Activated T-helper 1 cell treated with anti-CD3 and anti-CD28 coated beads, Interleukin-12 subunit alpha, Interleukin-12 subunit beta, Interleukin-2, Interleukin-4 antibody, amounts not matched to agents 30 ng/mL and 10 ng/mL and 1 ng/mL, durations not matched to agents 14 hours and 24 hours and 36 hours (primary cell): ENCODE measurements at regions of chr14 and their contacts with region 1.

Region 1: GRCh38 chr14:37985826-37986470 is 221.8 kb upstream of the SSTR1 start:
- DNase-seq: peak; percentile 17
- H3K4me3 Mint-ChIP-seq: no peak overlapping the region
- H3K27ac Mint-ChIP-seq: no peak overlapping the region
- H3K4me1 Mint-ChIP-seq: no peaks in the 10 kb centered on the region
- H3K27me3 Mint-ChIP-seq: peaks cover 2% of the 10 kb centered on the region

Region 2: DNA sequence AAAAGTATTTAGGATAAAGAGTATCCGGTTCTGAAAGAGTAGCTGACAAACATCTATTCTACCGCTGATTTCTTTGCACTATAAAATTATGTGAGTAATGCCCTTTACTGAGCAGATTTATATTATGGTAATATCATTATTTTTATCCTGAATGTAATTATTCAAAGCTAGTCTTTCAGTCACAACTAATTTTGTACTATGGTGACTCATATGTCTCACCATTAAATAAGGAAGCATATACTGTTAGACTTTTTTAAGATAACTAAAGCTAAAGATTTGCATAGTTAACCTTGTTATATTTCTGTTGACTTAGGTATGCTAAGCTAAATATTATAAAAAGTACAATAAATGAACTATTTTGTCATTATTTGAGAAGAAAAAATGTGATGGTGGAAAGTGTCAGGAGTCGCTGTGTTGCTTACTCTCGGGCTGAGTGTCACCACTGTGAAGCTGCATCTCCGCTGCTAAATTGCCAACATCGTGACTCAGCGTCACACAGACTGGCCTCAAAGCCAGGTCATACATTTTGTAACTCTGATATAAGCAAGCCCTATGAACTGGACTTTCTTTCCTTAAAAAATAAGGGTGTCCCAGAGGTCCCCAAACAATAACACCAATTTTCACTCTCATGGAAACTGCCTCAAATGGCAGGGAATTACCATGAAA is 152.7 kb after region 1 on chr14:
- intact Hi-C with region 1: loop called (anchors 10 kb)
- DNase-seq: no peak
- H3K4me3 Mint-ChIP-seq: no peak overlapping the region
- H3K27ac Mint-ChIP-seq: no peak overlapping the region
- H3K4me1 Mint-ChIP-seq: no peaks in the 10 kb centered on the region
- H3K27me3 Mint-ChIP-seq: peaks cover 2% of the 10 kb centered on the region

Region 3: DNA sequence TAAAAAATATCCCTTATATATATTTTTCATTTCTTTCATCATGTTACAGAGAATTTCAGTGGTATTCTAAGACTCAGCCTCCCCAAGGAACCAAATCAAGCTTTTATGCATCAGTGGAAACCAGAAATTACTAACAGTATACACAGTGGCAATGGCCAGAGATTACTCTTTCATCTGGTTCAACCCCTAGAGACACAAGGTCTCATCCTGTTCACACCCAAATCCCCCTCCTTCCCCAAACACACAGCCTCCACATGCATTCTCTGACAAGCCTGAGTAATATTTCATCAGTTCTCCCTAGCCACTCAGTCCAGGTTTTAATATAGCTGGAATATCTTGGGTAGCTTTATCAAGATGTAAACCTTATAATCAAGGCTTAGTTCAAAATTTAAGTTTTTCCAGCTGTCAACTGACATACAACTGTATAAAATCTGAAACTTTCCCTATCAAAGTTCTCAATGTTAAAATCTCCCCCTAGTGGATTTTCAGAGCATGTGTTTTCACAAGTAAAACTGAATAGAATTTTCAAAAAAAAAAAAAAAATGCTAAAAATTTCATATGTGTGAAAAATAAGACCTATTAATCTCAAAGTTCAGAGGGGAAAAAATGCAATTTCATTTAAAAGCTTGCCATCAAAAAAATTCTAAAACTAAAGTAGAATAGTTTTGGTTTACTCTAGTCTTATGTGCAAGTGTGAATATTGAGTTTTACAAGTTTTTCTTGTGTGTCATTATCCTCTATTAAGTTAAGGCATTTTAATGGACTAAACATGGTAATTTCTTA is 211.2 kb after region 1 on chr14:
- intact Hi-C with region 1: loop called (anchors 1 kb)
- DNase-seq: no peak
- H3K4me3 Mint-ChIP-seq: no peak overlapping the region
- H3K27ac Mint-ChIP-seq: no peak overlapping the region
- H3K4me1 Mint-ChIP-seq: no peaks in the 10 kb centered on the region
- H3K27me3 Mint-ChIP-seq: peaks cover 2% of the 10 kb centered on the region

Region 4: GRCh38 chr14:39015360-39015961 is 1029.5 kb after region 1 on chr14:
- intact Hi-C with region 1: loop called (anchors 2 kb)
- DNase-seq: no peak
- H3K4me3 Mint-ChIP-seq: no peak overlapping the region
- H3K27ac Mint-ChIP-seq: no peak overlapping the region
- H3K4me1 Mint-ChIP-seq: no peaks in the 10 kb centered on the region
- H3K27me3 Mint-ChIP-seq: no peaks in the 10 kb centered on the region